ENCODE measurements at regions of chr5 and their contacts with region 1.

Region 1: GRCh38 chr5:142699184-142699720 is 13.4 kb upstream of the FGF1 start:
- DNase-seq: peak; percentile 90
- H3K4me3 ChIP-seq: no peak overlapping the region
- H3K27ac ChIP-seq: peak overlapping the region; percentile 92
- H3K4me1 ChIP-seq: peaks cover 53% of the 10 kb centered on the region
- H3K27me3 ChIP-seq: no peaks in the 10 kb centered on the region
- CTCF ChIP-seq: peak; percentile 99

Region 2: DNA sequence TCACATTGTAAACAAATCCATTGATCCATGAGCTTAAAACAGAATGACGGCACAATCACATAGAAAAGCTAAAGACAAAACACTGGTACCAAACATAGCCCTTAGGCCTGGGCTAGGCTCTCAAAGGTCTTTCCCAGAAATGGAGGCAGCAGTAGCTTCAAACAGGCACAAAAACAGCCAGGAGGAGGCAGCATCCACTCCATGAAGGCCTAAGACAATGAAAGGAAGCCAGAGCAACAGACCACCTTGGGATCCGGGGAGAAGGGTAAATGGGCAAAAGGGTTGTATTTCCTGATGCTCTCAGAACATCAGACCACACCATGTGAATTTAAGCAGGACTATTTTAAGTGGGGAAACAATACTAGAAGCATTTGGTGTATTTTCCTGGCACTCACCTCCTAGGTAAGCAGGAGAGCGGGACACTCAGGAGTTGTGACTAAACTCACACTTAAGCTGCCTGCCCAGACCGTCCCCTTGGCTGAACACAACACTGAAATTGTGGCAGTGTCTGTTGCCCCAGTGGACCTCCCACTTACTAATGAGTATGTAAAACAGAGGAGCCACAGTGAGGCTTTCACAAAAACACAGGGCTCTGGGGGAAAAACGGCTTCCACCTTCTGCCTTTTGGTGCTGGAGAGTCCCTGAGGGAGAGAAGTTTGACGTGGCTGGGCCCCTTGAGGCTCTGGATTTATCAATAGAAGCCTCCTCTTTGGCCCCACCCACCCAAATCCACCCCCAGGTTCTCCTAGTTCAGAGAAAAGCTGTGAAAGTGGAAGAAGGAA is 698.4 kb before region 1 on chr5:
- intact Hi-C with region 1: loop called (anchors 10 kb)
- DNase-seq: no peak
- H3K4me3 ChIP-seq: no peak overlapping the region
- H3K27ac ChIP-seq: peak overlapping the region; percentile 3
- H3K4me1 ChIP-seq: no peaks in the 10 kb centered on the region
- H3K27me3 ChIP-seq: no peaks in the 10 kb centered on the region
- CTCF ChIP-seq: peak; percentile 39

Region 3: DNA sequence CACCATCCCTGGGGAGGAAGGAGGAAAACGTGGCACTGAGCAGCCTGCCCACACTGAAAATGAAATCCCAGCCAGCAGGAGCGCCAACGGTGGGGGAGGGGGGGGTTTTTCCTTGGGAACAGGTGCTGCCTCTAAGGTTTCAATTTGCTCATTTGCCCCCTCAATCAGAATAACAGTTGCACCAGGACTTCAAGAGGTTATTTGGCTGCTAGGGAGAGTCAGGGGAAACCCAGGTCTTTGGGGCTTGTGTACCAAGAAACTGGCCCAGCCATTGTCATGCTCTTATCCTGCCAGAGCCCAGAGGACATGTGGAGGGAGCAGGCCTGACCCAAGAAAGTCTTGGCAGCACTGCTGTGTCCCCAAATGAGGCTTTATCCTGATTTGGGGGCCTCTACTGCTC is 524.2 kb before region 1 on chr5:
- intact Hi-C with region 1: no loop called
- DNase-seq: no peak
- H3K4me3 ChIP-seq: no peak overlapping the region
- H3K27ac ChIP-seq: no peak overlapping the region
- H3K4me1 ChIP-seq: peaks cover 16% of the 10 kb centered on the region
- H3K27me3 ChIP-seq: no peaks in the 10 kb centered on the region
- CTCF ChIP-seq: no peak

Region 4: GRCh38 chr5:142611154-142611553 is 88.1 kb before region 1 on chr5:
- intact Hi-C with region 1: loop called (anchors 5 kb)
- DNase-seq: peak; percentile 71
- H3K4me3 ChIP-seq: no peak overlapping the region
- H3K27ac ChIP-seq: no peak overlapping the region
- H3K4me1 ChIP-seq: peaks cover 34% of the 10 kb centered on the region
- H3K27me3 ChIP-seq: no peaks in the 10 kb centered on the region
- CTCF ChIP-seq: peak; percentile 98

Region 5: GRCh38 chr5:142881076-142881783 is 182.0 kb after region 1 on chr5:
- intact Hi-C with region 1: no loop called
- DNase-seq: no peak
- H3K4me3 ChIP-seq: no peak overlapping the region
- H3K27ac ChIP-seq: peak overlapping the region; percentile 81
- H3K4me1 ChIP-seq: peaks cover 78% of the 10 kb centered on the region
- H3K27me3 ChIP-seq: no peaks in the 10 kb centered on the region
- CTCF ChIP-seq: no peak

Measured in left ventricle myocardium inferior (tissue), 1 donor.